Ascending aorta (tissue), 2 donors: ENCODE measurements at regions of chr4 and their contacts with region 1.

Region 1: DNA sequence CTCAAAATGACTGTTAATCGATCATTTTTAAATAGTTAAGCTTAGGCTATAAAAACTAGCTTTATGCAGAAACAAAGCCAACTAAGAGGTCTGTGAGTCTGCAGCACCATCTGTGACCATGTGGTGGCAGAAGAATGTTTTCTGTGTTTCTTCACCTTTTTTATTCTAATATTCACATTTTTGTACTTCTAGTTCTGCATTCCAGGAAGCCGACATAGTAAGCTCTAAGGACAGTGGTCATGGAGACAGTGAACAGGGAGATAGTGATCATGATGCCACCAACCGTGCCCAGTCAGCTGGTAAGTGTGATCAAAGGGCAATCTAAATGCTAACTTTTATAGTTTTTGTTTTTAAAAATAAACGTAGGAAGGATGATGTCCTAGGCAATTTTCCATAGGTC is 5.6 kb downstream of the PCDH10 start:
- DNase-seq: peak in 1 of 2 donors; percentile 64
- H3K4me3 ChIP-seq: peak overlapping the region in 1 of 2 donors; percentile 79
- H3K27ac ChIP-seq: no peak overlapping the region
- H3K4me1 ChIP-seq: no peaks in the 10 kb centered on the region
- H3K27me3 ChIP-seq: no peaks in the 10 kb centered on the region
- CTCF ChIP-seq: peak; percentile 54 to 81 (median 70)

Region 2: GRCh38 chr4:133186845-133187244 is 32.1 kb after region 1 on chr4:
- intact Hi-C with region 1: loop called (anchors 2 kb)
- DNase-seq: peak in 1 of 2 donors; percentile 78
- H3K4me3 ChIP-seq: no peak overlapping the region
- H3K27ac ChIP-seq: peak overlapping the region; percentile 53 to 80
- H3K4me1 ChIP-seq: peaks cover 0 to 8% of the 10 kb centered on the region in 2 donors
- H3K27me3 ChIP-seq: no peaks in the 10 kb centered on the region
- CTCF ChIP-seq: no peak

Region 3: GRCh38 chr4:133759428-133759827 is 604.7 kb after region 1 on chr4:
- intact Hi-C with region 1: loop called (anchors 10 kb)
- DNase-seq: no peak
- H3K4me3 ChIP-seq: no peak overlapping the region
- H3K27ac ChIP-seq: peak overlapping the region in 1 of 2 donors; percentile 5
- H3K4me1 ChIP-seq: peaks cover 0 to 6% of the 10 kb centered on the region in 2 donors
- H3K27me3 ChIP-seq: no peaks in the 10 kb centered on the region
- CTCF ChIP-seq: no peak